Adrenal gland (tissue), 19 donors: ENCODE measurements at regions of chr6 and their contacts with region 1.

Region 1: DNA sequence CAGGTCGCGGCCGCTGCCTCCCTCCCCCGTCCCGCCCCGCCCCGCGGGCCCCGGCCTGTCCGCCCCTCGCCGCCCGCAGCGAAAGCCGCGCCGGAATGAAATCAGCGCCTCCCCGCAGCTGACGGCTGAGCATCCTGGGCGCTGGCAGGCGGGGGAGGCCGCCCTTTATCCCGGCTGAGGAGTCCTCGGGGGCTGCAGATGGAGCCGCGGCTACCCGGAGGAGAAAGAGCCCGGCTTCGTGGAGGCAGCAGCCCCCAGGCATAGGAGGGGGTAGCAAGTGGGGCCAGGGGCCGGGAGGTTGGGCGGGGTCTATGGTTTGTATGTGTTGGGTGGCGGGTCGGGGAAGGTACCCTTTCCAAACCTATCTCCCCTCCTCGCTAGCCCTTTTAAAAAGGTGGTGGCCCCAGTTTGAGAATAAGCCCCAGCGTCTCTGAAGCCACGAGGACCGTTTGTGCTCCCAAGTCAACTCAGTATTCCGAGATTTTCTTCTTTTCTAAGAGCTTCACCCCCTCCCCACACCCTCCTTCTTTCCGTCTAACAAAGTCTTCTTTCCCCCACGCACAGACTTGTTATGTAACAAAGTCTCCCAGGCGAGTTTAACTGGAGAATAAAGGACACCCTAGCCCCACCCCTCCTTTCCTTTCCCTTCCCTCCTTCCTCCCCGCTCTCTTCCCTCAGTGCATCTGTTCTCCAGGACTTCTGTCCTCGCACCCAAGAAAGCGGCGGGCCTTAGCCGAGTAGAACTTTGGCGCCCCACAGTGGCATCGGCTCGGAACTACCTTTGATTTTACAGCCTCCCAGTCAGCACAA is 11.0 kb downstream of the POU3F2 start:
- DNase-seq: peak; percentile 59 to 90 (median 80)
- H3K4me3 ChIP-seq: peak overlapping the region in 1 of 4 donors; percentile 36
- H3K27ac ChIP-seq: no peak overlapping the region
- H3K4me1 ChIP-seq: peaks cover 4 to 25% of the 10 kb centered on the region in 2 donors
- H3K27me3 ChIP-seq: peaks cover 75% of the 10 kb centered on the region
- CTCF ChIP-seq: peak; percentile 73 to 91 (median 88)
- POLR2A ChIP-seq: no peak

Region 2: GRCh38 chr6:99119109-99120031 is 274.0 kb after region 1 on chr6:
- intact Hi-C with region 1: loop called (anchors 10 kb)
- DNase-seq: peak in 5 of 7 donors; percentile 9 to 46 (median 33)
- H3K4me3 ChIP-seq: no peak overlapping the region
- H3K27ac ChIP-seq: no peak overlapping the region
- H3K4me1 ChIP-seq: no peaks in the 10 kb centered on the region
- H3K27me3 ChIP-seq: no peaks in the 10 kb centered on the region
- CTCF ChIP-seq: peak; percentile 64 to 79 (median 72)
- POLR2A ChIP-seq: no peak

Region 3: DNA sequence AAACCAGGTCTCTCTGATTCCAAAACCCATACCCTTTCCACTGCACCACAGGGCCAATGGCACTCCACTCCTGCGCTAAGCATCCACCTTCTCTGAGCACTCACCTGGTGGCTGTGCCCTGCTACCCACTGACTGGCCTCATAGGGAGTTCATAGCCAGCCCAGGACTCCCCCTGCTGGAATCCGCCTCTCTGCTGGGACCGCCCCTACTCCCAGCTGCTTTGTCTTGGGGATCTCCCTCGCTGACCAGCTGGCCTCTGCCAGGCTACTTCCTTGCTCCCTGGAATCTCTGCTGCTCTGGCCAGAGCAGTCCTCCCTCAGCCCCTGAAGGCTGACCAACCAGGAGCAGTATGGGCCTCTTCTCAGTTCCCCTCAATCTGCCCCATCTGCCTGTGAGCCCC is 374.4 kb after region 1 on chr6:
- intact Hi-C with region 1: no loop called
- DNase-seq: no peak
- H3K4me3 ChIP-seq: no peak overlapping the region
- H3K27ac ChIP-seq: no peak overlapping the region
- H3K4me1 ChIP-seq: no peaks in the 10 kb centered on the region
- H3K27me3 ChIP-seq: no peaks in the 10 kb centered on the region
- CTCF ChIP-seq: no peak
- POLR2A ChIP-seq: no peak